ENCODE measurements at regions of chr19 and their contacts with region 1.

Region 1: GRCh38 chr19:43595999-43596841 is at the starts of genes IRGQ and ZNF576:
- DNase-seq: peak; percentile 100
- H3K4me3 Mint-ChIP-seq: peak within 1 kb of the TSS; percentile 97
- H3K27ac Mint-ChIP-seq: peak within 1 kb of the TSS; percentile 92
- H3K4me1 Mint-ChIP-seq: peaks cover 41% of the 10 kb centered on the region
- H3K27me3 Mint-ChIP-seq: no peaks in the 10 kb centered on the region
- total RNA-seq, gene IRGQ: 15.3 to 16.5 TPM
- total RNA-seq, gene ZNF576: 13.2 to 13.5 TPM

Region 2: GRCh38 chr19:43433358-43433673 is 162.9 kb before region 1 on chr19:
- CTCF ChIA-PET with region 1: interaction called, 15 read pairs
- POLR2A ChIA-PET with region 1: interaction called, 10 read pairs
- DNase-seq: no peak
- H3K4me3 Mint-ChIP-seq: no peak overlapping the region
- H3K27ac Mint-ChIP-seq: no peak overlapping the region
- H3K4me1 Mint-ChIP-seq: peaks cover 35% of the 10 kb centered on the region
- H3K27me3 Mint-ChIP-seq: peaks cover 2% of the 10 kb centered on the region

Region 3: DNA sequence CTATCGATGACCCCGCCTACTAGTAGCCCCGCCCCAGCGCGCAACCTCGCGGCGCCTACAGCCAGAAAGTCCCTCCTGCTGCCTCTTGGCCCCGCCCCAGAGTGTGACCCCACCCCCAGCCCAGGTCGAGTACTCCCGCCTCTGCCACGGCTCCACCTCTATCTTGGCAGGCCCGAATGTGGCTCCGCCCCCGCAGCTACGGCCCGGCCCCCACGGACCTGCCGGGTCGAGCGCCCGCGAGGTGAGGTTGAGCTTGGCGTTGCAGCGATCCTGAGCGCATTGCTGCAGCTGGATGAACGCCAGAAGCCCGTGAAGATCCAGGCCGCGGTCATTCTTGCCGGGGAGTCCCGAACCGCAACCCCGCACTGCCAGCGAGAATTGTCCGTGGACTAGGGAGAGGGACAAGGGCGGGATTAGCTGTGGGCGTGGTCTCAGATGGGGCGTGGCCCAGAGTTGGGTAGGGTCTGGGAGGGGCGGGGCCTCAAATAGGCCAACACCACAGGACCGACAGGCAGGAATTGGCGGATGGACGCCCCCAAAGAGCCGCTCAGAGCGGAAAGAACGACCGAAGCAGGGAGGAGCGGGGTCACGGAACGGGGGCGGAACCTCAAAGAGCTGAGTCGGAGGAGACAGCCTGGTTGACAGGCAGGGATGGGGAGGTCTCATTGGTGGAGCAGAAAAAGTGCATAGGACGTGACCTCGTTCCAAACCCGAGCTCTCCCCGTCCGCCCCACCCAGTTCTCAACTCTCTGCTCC is 132.7 kb before region 1 on chr19:
- CTCF ChIA-PET with region 1: interaction called, 11 read pairs
- POLR2A ChIA-PET with region 1: interaction called, 5 read pairs
- DNase-seq: peak; percentile 99
- H3K4me3 Mint-ChIP-seq: peak overlapping the region; percentile 88
- H3K27ac Mint-ChIP-seq: peak overlapping the region; percentile 93
- H3K4me1 Mint-ChIP-seq: peaks cover 34% of the 10 kb centered on the region
- H3K27me3 Mint-ChIP-seq: peaks cover 12% of the 10 kb centered on the region

Region 4: DNA sequence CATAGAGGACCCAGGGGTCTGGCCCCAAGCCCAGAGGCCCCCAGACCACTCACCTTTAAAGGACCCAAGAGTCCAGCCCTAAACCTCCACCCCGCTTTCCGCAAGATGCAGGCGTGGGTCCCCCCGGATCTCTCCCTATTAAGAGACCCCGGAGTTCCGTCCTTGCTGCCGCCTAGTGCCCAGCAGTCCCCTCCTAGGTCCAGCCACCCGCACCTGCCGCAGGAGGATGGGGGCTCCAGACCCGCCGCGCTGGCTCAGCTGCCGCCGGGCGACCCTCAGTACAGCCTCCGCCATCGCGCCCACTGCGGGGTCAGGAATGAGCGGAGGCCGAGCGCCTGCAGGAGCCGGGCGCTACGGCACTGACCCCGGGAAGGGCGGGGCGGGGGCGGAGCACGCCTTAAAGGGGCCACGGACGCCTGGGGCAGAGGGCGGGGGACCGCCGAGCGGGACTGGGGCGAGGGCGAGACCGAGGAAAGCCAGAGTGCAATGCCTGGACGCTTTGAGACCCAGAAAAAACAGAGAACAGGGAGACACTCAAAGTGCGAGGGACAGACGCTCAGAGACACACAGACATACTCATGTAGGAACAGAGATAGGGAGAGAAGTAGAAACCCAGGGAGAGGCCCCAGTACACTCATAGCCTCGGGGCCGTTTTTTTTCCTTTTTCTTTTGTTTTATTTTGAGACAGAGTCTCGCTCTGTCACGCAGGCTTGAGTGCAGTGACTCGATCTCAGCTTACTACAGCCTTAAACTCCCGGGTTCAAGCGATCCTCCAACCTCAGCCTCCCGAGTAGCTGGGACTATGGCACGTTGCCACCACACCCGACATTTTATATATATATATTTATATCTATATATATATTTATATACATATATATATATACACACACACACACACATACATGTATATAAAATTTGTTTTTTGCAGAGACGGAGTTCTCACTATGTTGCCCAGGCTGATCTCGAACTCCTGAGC is 69.0 kb before region 1 on chr19 and contains the start of gene ETHE1:
- CTCF ChIA-PET with region 1: interaction called, 18 read pairs
- POLR2A ChIA-PET with region 1: interaction called, 27 read pairs
- DNase-seq: peak; percentile 83
- H3K4me3 Mint-ChIP-seq: peak within 1 kb of the TSS; percentile 94
- H3K27ac Mint-ChIP-seq: peak within 1 kb of the TSS; percentile 79
- H3K4me1 Mint-ChIP-seq: peaks cover 28% of the 10 kb centered on the region
- H3K27me3 Mint-ChIP-seq: no peaks in the 10 kb centered on the region
- total RNA-seq, gene ETHE1: 90.7 to 91.1 TPM

Region 5: GRCh38 chr19:43562698-43563241 is 33.5 kb before region 1 on chr19:
- CTCF ChIA-PET with region 1: interaction called, 208 read pairs
- POLR2A ChIA-PET with region 1: interaction called, 11 read pairs
- DNase-seq: peak; percentile 85
- H3K4me3 Mint-ChIP-seq: peak overlapping the region; percentile 54
- H3K27ac Mint-ChIP-seq: peak overlapping the region; percentile 99
- H3K4me1 Mint-ChIP-seq: peaks cover 45% of the 10 kb centered on the region
- H3K27me3 Mint-ChIP-seq: no peaks in the 10 kb centered on the region

Region 6: DNA sequence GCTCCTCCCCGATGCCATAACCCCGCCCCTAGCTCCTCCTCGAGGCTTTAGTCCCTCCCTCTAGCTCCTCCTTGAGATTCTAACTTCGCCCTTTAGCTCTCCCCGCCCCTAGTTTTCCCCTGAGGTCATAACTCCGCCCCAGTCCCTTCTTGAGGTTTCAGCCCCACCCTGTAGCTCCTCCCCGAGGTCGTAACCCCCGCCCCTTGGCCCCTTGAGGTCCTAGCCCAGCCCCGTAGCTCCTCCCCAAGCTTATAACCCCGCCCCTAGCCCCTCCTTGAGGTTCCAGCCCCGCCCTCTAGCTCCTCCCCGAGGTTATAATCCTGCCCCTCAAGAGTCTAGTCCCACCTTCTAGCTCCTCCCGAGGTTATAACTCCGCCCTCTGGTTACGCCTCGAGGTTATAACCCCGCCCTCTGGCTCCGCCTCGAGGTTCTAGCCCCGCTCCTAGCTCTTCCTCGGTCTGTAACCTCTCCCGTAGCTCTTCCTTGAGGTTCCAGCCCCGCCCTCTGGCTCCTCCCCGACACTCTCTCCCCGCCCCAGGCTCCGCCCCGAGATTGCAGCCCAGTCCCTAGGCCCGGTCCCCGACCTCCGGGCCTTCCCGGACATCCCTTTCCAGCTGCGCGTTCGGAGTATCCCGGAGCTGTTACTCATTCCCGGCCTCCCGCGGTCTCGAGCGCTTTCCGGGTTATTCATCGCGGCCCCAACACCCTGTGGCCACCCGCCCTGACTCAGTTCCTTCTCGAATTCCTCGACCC is 72.4 kb after region 1 on chr19:
- CTCF ChIA-PET with region 1: interaction called, 29 read pairs
- POLR2A ChIA-PET with region 1: no interaction called
- DNase-seq: peak; percentile 99
- H3K4me3 Mint-ChIP-seq: peak overlapping the region; percentile 79
- H3K27ac Mint-ChIP-seq: peak overlapping the region; percentile 55
- H3K4me1 Mint-ChIP-seq: peaks cover 49% of the 10 kb centered on the region
- H3K27me3 Mint-ChIP-seq: peaks cover 10% of the 10 kb centered on the region

Region 7: DNA sequence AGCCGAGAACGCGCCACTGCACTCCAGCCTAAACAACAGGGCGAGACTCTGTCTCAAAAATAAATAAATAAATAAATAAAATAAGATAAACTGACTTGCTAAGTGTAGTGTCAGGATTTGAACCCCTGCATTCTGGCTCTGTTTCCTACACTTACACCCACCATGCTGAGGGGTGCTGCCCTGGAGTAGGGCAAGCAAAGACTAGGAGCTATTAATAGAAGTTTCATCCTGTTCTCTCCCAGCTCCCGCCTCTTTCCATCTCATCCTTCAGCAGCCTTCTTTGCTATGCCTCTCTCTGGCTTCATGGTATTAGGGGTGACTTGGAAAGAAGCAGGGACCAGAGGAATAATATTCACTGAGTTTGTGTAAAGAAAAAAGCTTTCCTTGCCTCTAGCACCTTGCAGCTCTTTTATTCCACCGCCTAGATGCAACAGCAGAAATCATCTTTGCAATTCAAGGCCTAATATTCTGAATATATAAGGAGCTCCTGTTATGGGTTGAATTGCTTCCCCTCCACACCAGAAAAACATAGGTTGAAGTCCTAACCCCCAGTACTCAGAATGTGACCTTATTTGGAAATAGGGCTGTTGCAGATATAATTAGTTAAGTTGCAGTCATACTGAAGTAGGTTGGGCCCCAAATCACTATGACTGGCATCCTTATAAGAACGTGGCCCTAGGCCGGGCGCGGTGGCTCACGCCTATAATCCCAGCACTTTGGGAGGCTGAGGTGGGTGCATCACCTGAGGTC is 82.5 kb after region 1 on chr19:
- CTCF ChIA-PET with region 1: no interaction called
- POLR2A ChIA-PET with region 1: no interaction called
- DNase-seq: no peak
- H3K4me3 Mint-ChIP-seq: no peak overlapping the region
- H3K27ac Mint-ChIP-seq: no peak overlapping the region
- H3K4me1 Mint-ChIP-seq: peaks cover 19% of the 10 kb centered on the region
- H3K27me3 Mint-ChIP-seq: no peaks in the 10 kb centered on the region